BJ (cell line): ENCODE measurements at regions of chr12 and their contacts with region 1.

Region 1: DNA sequence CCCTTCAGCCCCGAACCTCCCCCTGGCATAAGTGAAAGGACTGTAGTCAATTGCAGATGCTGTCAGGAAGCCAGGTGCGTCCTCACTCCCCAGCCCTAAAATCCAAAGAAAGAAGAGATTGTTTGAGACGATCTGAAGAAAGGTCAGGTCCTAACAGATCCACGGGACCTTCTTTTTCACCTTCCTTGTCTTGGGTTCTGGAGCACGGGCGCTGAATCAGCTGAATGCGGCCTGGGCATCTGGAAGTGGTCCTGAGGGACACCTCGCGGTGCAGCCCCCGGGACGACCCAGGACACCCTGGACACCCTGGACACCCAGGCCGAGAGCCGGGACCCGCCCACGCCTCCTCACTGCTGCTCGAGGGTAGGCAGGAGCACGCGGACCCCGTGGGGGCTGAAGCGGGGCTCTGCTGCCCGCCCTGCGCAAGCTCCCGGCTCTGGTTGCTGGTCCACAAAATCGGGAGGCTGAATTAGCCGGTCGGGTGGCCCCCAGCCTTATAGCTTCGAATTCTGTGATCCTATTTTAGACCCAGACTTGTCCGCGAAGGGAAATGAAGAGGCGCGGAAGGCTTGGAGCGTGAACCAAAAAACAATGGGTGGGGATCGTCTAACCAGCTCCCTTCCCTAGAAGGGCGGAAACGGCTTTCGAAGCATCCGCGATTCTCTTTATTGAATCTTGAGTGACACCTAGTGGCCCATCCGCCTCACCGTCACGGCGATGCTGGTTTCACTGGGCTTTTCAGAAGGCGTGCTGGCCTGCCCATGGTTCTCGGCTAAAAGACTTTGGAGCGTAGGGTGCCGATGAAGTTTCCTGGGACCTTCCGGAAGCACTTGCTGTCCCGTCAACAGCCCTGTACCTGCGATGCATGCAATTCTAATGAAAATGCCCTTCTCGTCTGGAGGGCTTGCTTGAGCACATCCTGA is 46.4 kb upstream of the PLXNC1 start:
- DNase-seq: no peak
- H3K4me3 ChIP-seq: peak overlapping the region; percentile 56
- H3K27me3 ChIP-seq: peaks cover 2% of the 10 kb centered on the region; the same call in 1 of the 2 replicates
- CTCF ChIP-seq: peak; percentile 78

Region 2: DNA sequence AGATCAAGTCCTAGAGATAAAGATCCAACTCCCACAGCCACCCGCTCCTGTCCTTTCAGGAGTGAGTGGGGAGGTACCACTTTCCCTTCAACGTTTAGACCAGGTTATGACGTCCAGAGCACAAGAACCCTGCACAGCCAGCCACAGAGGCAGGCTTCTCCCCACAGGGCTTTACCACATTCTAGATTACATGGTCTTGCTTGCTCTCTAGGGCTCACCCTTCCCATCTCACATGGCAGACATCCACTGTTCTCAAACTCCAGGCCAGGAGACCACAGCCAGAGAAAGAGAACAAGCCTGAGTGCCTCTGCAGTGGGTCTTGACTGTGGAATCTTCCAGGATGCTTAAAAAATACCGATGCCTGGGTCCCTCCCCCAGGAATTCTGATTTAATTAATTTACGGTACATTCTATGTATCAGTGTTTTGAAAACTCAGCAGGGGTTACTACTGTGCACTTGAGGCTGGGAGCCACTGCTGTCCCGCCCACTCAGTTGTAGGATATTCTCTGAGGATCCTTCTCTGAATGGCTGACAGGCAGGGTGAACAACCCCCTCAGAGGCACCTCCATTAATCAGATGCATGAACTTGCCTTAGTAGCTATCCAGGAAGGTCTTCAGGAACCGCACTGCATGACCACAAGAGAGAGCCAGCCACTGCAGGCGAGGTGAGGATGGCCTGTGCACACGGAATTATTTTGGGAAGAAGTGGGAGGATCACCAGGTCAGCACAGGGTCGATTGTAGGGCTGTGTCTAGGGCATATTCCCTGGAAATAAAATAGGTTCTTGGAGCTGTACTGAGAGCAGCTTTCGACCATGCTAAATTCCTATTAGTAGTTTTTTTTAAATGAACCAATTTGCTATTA is 551.0 kb before region 1 on chr12:
- CTCF ChIA-PET with region 1: interaction called, 14 read pairs
- POLR2A ChIA-PET with region 1: no interaction called
- DNase-seq: no peak
- H3K4me3 ChIP-seq: no peak overlapping the region
- H3K27me3 ChIP-seq: no peaks in the 10 kb centered on the region
- CTCF ChIP-seq: no peak

Region 3: DNA sequence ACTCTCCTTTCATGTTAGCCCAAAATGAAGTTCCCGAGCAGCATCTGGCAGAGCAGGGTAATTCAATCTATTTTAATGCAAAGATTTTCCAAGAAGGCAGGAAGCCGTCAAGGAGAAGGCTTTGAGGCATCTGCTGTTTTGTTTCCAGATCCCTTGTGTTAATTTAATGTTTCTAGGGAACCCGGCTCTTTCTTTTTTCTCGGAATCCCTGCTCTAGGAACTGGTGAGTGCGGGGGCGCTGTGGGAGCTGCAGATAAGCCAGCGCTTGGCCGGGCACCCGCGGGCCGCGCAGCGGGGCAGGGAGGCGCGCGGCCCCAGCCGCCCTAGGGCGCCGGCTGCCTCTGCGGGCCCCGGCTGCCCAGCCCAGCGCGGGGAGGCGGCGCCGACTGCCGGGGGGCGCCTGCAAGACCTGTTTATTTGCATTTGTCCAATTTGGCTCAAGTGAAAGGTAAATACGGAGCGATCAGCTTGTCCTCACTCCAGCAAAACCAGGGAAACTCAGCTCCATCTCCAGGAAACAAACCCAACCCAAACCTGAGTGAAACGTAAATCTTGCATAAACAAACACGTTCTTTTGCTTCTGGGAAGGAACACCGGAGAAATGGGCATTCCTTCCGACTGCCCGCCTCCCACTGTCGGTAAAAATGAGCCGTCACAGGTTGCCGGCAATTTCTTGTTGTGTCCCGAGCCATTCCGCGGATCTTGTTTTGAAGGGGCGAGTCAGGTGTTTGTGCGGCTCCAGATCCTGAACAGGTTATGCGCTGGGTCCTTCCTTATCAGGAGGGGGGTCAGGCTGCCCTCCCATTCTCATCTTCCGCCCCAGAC is 359.7 kb before region 1 on chr12:
- CTCF ChIA-PET with region 1: interaction called, 10 read pairs
- POLR2A ChIA-PET with region 1: no interaction called
- DNase-seq: no peak
- H3K4me3 ChIP-seq: peak overlapping the region; percentile 44
- H3K27me3 ChIP-seq: no peaks in the 10 kb centered on the region
- CTCF ChIP-seq: peak; percentile 39; the same call in 1 of the 2 replicates

Region 4: GRCh38 chr12:93773122-93773871 is 328.7 kb before region 1 on chr12:
- CTCF ChIA-PET with region 1: interaction called, 85 read pairs
- POLR2A ChIA-PET with region 1: no interaction called
- DNase-seq: no peak
- H3K4me3 ChIP-seq: no peak overlapping the region
- H3K27me3 ChIP-seq: no peaks in the 10 kb centered on the region
- CTCF ChIP-seq: no peak

Region 5: DNA sequence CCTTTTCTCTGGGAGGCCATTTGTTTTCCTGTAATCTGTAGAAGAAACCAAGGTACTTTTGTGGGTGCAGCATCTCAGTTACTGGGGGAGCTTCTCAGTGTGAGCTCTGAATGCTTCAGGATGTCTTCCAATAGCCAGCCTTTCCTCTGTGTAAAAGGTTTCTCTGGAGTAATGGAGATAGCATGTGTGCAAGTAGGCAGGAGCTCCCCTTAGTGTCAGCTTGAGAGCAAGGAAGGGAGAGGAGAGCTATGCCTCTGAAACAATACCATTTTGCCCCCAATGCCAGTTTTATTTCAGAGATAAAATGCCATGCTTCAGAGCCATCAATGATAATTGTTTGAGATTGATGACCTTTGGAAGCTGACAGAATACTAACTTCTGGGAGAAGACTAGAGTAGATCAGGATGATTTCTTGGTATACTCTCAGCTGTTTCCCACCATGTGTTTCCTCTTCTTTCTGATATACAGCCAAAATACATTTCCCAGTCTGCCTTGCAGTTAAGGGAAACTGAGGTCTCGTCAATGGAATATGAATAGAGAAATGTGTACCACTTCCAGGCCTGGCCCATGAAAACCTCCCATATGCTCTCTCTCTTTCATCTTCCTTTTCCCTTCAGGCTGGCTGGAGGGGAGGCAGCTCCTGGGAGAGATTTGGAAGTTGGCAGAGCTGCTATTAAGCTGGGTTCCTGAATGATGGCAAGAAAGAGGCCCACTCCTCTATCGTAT is 299.1 kb before region 1 on chr12:
- CTCF ChIA-PET with region 1: interaction called, 31 read pairs
- POLR2A ChIA-PET with region 1: no interaction called
- DNase-seq: no peak
- H3K4me3 ChIP-seq: no peak overlapping the region
- H3K27me3 ChIP-seq: no peaks in the 10 kb centered on the region
- CTCF ChIP-seq: peak; percentile 53

Region 6: GRCh38 chr12:93894391-93895088 is 207.5 kb before region 1 on chr12:
- CTCF ChIA-PET with region 1: interaction called, 52 read pairs
- POLR2A ChIA-PET with region 1: no interaction called
- DNase-seq: no peak
- H3K4me3 ChIP-seq: no peak overlapping the region
- H3K27me3 ChIP-seq: no peaks in the 10 kb centered on the region
- CTCF ChIP-seq: no peak

Region 7: DNA sequence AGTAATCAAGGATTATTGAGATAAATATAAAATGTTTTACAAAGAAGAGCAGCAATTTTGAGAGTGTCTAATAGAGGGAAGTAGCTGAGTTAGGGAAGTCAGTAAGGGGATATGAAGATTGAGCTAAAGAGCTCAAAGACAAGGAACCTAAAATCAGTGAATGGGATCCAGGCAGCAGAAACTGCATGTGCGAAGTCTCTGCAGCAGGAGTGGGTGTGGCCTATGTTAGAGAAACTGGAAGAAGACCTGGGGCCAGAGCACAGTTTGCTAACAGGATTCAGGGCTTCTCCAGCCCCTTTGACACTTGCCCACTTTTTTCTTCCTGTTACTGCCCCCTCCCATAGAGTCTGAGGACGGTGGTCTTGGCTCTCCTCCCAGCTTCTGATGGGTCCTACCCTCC is 10.1 kb after region 1 on chr12:
- CTCF ChIA-PET with region 1: interaction called, 11 read pairs
- POLR2A ChIA-PET with region 1: no interaction called
- DNase-seq: no peak
- H3K4me3 ChIP-seq: no peak overlapping the region
- H3K27me3 ChIP-seq: peaks cover 1% of the 10 kb centered on the region; the same call in 1 of the 2 replicates
- CTCF ChIP-seq: no peak